Left cardiac atrium (tissue), 4 donors: ENCODE measurements at regions of chr7 and their contacts with region 1.

Region 1: DNA sequence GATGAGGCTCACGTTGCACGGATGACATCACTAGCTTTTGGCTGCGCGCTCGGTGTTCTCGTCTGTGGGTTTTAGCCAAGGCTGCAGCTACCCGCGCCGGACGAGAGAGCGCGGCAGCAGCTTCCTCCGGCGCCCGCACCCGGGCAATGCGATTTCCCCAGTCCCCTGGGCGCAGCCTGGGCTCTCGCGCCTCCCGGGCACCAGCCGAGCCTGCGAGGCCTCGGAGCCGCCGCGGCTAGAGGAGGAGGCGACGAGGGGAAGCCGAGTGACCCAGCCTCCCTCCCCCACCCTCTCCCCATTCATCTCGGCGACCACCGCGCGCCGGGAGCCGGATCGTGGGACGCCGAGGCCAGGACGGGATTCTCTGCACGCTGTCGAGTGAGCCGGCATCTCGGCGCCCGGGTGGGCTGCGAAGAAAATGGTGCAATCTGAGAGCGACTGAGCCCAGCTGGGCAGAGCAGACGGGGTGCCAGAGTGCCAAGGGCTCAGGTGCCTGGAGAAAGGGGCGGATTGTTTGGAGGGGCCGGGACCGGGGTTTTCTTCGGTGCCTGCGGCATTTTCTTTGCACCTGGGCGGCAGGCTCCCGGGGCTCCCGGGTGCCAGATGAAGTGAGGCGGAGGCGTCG is 1.2 kb upstream of the TMEM178B start:
- DNase-seq: peak; percentile 65
- ATAC-seq: peak; percentile 76 to 89

Region 2: GRCh38 chr7:141210862-141211261 is 138.2 kb after region 1 on chr7:
- intact Hi-C with region 1: loop called in 1 of 2 experiments (anchors 10 kb)
- DNase-seq: no peak
- ATAC-seq: no peak